Naive thymus-derived CD4-positive, alpha-beta T cell (primary cell): ENCODE measurements at regions of chr5 and their contacts with region 1.

Region 1: DNA sequence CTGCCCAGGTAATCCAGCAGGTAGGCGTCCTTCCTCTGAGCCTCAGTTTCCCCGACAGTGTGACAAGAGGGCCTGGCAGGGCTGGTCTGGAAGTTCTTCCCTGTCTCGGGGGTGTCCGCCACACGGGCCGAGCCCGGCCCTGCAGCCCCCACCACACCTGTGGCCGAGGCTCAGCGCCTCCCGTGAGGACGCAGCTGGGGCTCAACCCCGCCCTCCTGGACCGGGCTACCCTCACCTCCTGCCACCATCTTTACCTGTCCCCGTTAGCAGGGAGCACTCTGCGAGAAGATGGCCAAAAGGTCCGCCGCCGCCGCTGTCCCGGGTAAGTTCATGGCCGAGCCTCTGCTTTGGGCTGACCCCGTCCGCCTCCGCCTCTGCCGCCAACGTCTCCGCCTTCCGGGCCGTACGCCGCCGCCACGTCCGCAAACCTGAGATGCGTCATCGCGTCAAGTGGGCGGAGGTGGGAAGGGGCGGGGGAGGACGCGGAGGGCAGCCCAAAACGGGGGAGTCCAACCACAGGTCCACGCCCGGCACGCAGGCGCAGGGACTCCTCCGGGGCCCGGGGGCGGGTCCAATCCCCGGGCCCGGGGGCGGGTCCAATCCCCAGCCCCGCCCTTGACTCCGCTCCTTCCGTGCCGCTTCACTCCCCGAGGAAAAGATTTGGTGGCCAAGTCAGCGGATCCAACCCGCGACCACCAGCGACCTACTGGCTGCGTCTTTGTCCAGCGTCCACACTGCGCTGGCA is at the start of gene LYSMD3:
- DNase-seq: peak; percentile 94 to 97 (median 96)
- ATAC-seq: peak; percentile 96
- H3K4me3 ChIP-seq: peak within 1 kb of the TSS; percentile 89
- H3K4me3 Mint-ChIP-seq: peak within 1 kb of the TSS; percentile 89 to 100 (median 99)
- H3K27ac ChIP-seq: peak within 1 kb of the TSS; percentile 96
- H3K27ac Mint-ChIP-seq: peak within 1 kb of the TSS; percentile 94 to 100 (median 99)
- H3K4me1 ChIP-seq: peaks cover 13 to 17% of the 10 kb centered on the region in 2 donors
- H3K4me1 Mint-ChIP-seq: peaks cover 20 to 42% (median 31%) of the 10 kb centered on the region in 7 donors
- H3K27me3 ChIP-seq: no peaks in the 10 kb centered on the region
- H3K27me3 Mint-ChIP-seq: peaks cover 12 to 24% (median 17%) of the 10 kb centered on the region in 5 donors
- total RNA-seq, gene LYSMD3: 15.8 to 32.0 (median 25.6) TPM

Region 2: GRCh38 chr5:88729084-88729828 is 1800.1 kb before region 1 on chr5:
- CTCF ChIA-PET with region 1: interaction called, 8 read pairs
- POLR2A ChIA-PET with region 1: no interaction called
- intact Hi-C with region 1: loop called (anchors 1 to 5 kb)
- DNase-seq: peak in 8 of 9 donors; percentile 28 to 64 (median 50)
- ATAC-seq: peak; percentile 81
- H3K4me3 ChIP-seq: no peak overlapping the region
- H3K4me3 Mint-ChIP-seq: no peak overlapping the region
- H3K27ac ChIP-seq: no peak overlapping the region
- H3K27ac Mint-ChIP-seq: no peak overlapping the region
- H3K4me1 ChIP-seq: no peaks in the 10 kb centered on the region
- H3K4me1 Mint-ChIP-seq: peaks cover 3 to 8% (median 4%) of the 10 kb centered on the region in 7 donors
- H3K27me3 ChIP-seq: no peaks in the 10 kb centered on the region
- H3K27me3 Mint-ChIP-seq: peaks cover 8 to 18% (median 17%) of the 10 kb centered on the region in 5 donors

Region 3: DNA sequence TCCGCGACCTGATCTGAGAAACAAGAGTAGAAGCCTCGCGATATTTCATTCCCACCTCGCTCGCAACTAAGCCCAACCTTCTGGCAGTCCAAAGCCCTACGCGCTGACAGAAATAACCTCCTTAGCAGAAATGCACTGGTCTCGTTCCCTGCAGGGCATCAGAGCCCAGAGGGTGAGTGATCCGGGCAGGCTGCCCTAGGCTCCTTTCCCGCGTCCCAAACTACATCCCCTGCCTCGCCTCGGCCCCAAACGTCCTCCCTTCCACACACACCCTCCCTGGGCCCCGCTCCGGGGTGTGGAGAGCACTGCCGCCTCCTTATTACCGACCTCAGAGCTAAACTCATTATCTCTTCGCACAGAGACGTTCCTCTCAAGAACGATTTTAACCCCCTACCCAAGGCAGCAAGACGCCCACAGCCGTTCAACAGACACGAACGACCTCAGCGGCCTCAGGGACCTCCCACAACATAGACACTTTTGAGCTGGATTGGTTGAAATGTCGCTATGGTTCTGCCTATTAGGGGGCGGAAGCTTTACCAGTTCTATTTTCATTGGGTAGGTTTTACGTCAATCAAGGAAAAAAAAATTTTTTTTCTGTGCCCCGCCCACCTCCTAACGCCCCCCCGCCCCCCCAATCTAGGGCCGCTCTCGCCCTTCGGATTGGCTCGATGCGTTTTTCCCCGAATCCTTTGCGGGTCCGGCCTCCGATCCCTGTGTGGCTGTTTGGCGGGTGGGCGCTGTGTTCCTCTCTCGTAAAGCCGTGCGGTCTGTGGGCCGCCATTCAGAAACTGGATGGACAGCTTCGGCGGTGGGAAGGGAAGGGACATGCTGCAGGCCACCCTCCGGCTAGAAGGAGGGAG is 119.8 kb before region 1 on chr5 and contains the start of gene CETN3:
- CTCF ChIA-PET with region 1: interaction called, 19 read pairs
- POLR2A ChIA-PET with region 1: interaction called, 20 read pairs
- intact Hi-C with region 1: loop called (anchors 1 kb)
- DNase-seq: peak; percentile 72 to 93 (median 88)
- ATAC-seq: peak; percentile 94
- H3K4me3 ChIP-seq: peak within 1 kb of the TSS; percentile 100
- H3K4me3 Mint-ChIP-seq: no peak within 1 kb of the TSS
- H3K27ac ChIP-seq: peak within 1 kb of the TSS; percentile 93
- H3K27ac Mint-ChIP-seq: no peak within 1 kb of the TSS
- H3K4me1 ChIP-seq: peaks cover 7 to 13% of the 10 kb centered on the region in 2 donors
- H3K4me1 Mint-ChIP-seq: peaks cover 12 to 26% (median 16%) of the 10 kb centered on the region in 7 donors
- H3K27me3 ChIP-seq: no peaks in the 10 kb centered on the region
- H3K27me3 Mint-ChIP-seq: peaks cover 0 to 4% (median 0%) of the 10 kb centered on the region in 5 donors
- total RNA-seq, gene CETN3: 4.4 to 31.0 (median 22.1) TPM

Region 4: DNA sequence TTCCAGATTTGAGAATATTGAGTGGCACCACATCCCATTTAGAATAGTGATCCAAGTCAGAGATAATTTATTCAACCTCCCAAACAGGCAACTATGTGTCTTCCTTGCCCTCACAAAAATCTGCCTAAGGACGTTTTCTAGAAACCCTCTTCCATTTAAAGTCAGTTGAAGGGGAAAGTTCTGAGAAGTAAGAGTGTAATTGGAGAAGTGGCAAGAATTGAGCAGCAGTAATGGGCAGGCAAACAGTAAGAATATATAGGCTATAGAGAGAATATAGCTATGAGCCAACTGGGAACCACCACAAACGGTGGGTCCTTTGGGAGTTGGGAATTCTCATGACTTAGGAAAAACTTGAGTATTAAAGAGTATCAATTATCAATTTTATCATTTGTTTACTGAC is 88.7 kb before region 1 on chr5:
- CTCF ChIA-PET with region 1: interaction called, 12 read pairs
- POLR2A ChIA-PET with region 1: interaction called, 6 read pairs
- intact Hi-C with region 1: loop called (anchors 1 kb)
- DNase-seq: no peak
- ATAC-seq: no peak
- H3K4me3 ChIP-seq: no peak overlapping the region
- H3K4me3 Mint-ChIP-seq: peak overlapping the region in 7 of 10 donors; percentile 61 to 86 (median 84)
- H3K27ac ChIP-seq: no peak overlapping the region
- H3K27ac Mint-ChIP-seq: no peak overlapping the region
- H3K4me1 ChIP-seq: no peaks in the 10 kb centered on the region
- H3K4me1 Mint-ChIP-seq: peaks cover 0 to 12% (median 7%) of the 10 kb centered on the region in 7 donors
- H3K27me3 ChIP-seq: no peaks in the 10 kb centered on the region
- H3K27me3 Mint-ChIP-seq: peaks cover 0 to 18% (median 0%) of the 10 kb centered on the region in 5 donors

Region 5: DNA sequence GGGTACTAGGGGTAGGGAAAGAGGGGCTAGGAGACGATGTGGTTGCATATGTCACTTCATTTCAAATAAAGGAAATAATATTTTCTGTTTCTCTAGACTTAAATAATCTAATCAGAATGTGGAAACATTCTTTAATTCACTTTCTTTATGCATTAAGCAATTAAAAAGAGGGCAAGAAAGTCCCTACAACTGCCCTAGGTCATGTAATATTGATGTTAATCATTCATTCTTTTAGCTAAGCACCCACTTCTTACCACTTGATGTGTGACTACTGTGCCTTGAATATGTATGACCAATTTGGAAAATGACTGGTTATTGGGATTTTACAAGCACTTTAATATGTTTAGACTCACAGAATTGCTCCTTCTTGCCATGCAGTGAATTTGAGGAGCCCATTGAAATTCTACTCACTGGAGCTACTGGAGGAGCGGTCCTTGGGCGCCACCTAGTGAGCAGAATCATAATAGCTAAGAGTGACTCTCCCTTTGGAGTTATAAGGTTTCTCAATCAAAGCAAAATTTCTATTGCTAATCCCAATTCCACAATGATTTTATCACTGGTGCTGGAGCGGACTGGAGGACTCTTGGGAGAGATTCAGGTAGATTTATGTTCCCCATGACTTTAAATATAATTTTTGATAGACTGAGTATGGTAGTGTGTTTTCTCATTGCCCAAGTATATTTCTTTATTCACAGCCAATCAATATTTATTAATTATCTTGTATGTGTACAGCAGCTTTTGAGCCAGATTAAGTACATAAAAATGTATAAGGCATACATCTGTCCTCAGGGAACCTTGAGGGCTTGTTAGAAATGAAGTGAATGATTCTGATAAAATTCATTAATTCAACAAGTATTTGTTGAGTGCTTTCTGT is 254.3 kb after region 1 on chr5:
- CTCF ChIA-PET with region 1: no interaction called
- POLR2A ChIA-PET with region 1: no interaction called
- intact Hi-C with region 1: loop called (anchors 1 kb)
- DNase-seq: peak; percentile 27 to 72 (median 59)
- ATAC-seq: peak; percentile 82
- H3K4me3 ChIP-seq: no peak overlapping the region
- H3K4me3 Mint-ChIP-seq: no peak overlapping the region
- H3K27ac ChIP-seq: no peak overlapping the region
- H3K27ac Mint-ChIP-seq: no peak overlapping the region
- H3K4me1 ChIP-seq: no peaks in the 10 kb centered on the region
- H3K4me1 Mint-ChIP-seq: peaks cover 0 to 2% (median 0%) of the 10 kb centered on the region in 7 donors
- H3K27me3 ChIP-seq: no peaks in the 10 kb centered on the region
- H3K27me3 Mint-ChIP-seq: peaks cover 11 to 23% (median 16%) of the 10 kb centered on the region in 5 donors

Region 6: DNA sequence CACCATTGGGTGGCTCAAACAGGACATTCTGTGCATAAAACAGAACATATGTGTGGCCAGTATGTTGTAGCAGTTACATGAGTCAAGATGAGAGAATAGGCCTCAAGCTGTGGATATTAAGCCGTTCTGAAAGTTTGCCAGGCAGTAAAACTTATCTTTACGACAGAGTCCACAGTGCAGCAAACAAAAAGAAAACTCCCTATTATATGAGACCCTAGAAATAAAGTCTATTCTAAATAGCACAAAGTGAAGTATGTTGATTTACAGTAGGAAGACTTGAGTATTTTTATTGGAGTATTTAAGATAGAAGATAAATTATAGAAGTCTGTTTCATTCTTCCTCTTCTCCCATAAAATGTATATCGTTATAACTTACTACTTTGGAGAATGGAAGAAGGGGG is 300.7 kb after region 1 on chr5:
- CTCF ChIA-PET with region 1: no interaction called
- POLR2A ChIA-PET with region 1: no interaction called
- intact Hi-C with region 1: no loop called
- DNase-seq: no peak
- ATAC-seq: no peak
- H3K4me3 ChIP-seq: no peak overlapping the region
- H3K4me3 Mint-ChIP-seq: no peak overlapping the region
- H3K27ac ChIP-seq: no peak overlapping the region
- H3K27ac Mint-ChIP-seq: no peak overlapping the region
- H3K4me1 ChIP-seq: no peaks in the 10 kb centered on the region
- H3K4me1 Mint-ChIP-seq: no peaks in the 10 kb centered on the region
- H3K27me3 ChIP-seq: peaks cover 0 to 6% of the 10 kb centered on the region in 2 donors
- H3K27me3 Mint-ChIP-seq: peaks cover 6 to 31% (median 18%) of the 10 kb centered on the region in 5 donors

Region 7: DNA sequence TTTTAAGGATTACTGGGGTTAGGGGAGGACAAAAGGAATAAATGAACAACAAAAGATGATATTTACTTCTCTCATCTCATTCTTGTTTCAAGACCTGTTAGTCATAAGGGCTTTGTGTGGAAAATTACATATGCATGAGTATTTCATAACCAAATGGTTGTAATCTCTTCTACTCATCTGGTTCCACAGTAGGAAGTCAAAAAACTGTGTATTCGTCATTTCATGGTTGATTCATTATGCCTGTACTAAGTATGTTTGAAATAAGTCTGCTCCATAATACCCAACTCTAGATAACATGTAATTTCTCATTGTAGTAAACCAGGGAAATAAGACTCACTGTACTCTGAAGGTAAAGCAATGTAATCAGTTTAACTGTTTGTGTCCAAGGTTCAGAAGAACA is 640.9 kb after region 1 on chr5:
- CTCF ChIA-PET with region 1: no interaction called
- POLR2A ChIA-PET with region 1: no interaction called
- intact Hi-C with region 1: no loop called
- DNase-seq: no peak
- ATAC-seq: peak; percentile 85
- H3K4me3 ChIP-seq: no peak overlapping the region
- H3K4me3 Mint-ChIP-seq: no peak overlapping the region
- H3K27ac ChIP-seq: no peak overlapping the region
- H3K27ac Mint-ChIP-seq: no peak overlapping the region
- H3K4me1 ChIP-seq: no peaks in the 10 kb centered on the region
- H3K4me1 Mint-ChIP-seq: peaks cover 0 to 9% (median 0%) of the 10 kb centered on the region in 7 donors
- H3K27me3 ChIP-seq: no peaks in the 10 kb centered on the region
- H3K27me3 Mint-ChIP-seq: peaks cover 0 to 9% (median 0%) of the 10 kb centered on the region in 5 donors